MCF 10A (cell line): ENCODE measurements at regions of chr3 and their contacts with region 1.

Region 1: GRCh38 chr3:39288300-39288808 is 8.5 kb upstream of the CX3CR1 start:
- DNase-seq: peak; percentile 80
- H3K4me3 Mint-ChIP-seq: no peak overlapping the region
- H3K27ac Mint-ChIP-seq: no peak overlapping the region
- H3K4me1 Mint-ChIP-seq: peaks cover 7% of the 10 kb centered on the region
- H3K27me3 Mint-ChIP-seq: no peaks in the 10 kb centered on the region
- CTCF ChIP-seq: peak; percentile 94

Region 2: DNA sequence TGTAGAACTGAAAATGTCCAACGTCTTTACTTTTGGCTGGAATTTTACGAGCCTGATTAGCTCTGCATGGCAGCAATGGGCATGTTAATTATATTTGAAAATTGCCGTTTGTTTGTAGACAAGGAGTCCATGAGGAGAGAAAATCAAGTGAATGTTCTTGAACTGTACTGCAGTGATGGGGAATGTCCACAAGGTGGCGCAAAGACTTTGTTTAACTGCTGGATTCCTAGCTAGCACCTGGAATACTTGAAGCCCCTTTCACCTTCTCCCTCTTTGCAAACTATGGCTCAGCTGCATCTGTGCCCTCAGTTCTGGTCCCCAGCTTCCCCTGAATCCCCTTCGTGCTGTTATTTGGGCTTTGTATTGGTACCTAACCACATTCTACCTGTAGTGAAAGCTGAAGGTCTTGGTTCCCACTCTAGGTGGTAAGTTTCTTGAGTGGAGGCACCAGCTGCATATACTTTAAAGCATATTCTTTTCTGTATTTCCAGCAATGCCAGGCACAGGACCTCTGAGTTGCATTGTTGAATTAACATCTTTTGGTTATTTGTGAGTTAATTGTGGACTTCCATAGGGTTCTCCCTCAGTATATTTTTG is 766.9 kb before region 1 on chr3:
- CTCF ChIA-PET with region 1: interaction called, 16 read pairs
- POLR2A ChIA-PET with region 1: no interaction called
- intact Hi-C with region 1: no loop called
- DNase-seq: peak; percentile 76
- H3K4me3 Mint-ChIP-seq: no peak overlapping the region
- H3K27ac Mint-ChIP-seq: no peak overlapping the region
- H3K4me1 Mint-ChIP-seq: no peaks in the 10 kb centered on the region
- H3K27me3 Mint-ChIP-seq: no peaks in the 10 kb centered on the region
- CTCF ChIP-seq: peak; percentile 87

Region 3: GRCh38 chr3:39107388-39108199 is 180.8 kb before region 1 on chr3 and contains the starts of genes GORASP1 and TTC21A:
- CTCF ChIA-PET with region 1: interaction called, 39 read pairs
- POLR2A ChIA-PET with region 1: interaction called, 7 read pairs
- intact Hi-C with region 1: no loop called
- DNase-seq: peak; percentile 84
- H3K4me3 Mint-ChIP-seq: peak within 1 kb of the TSS; percentile 94
- H3K27ac Mint-ChIP-seq: peak within 1 kb of the TSS; percentile 94
- H3K4me1 Mint-ChIP-seq: peaks cover 37% of the 10 kb centered on the region
- H3K27me3 Mint-ChIP-seq: no peaks in the 10 kb centered on the region
- CTCF ChIP-seq: no peak
- total RNA-seq, gene GORASP1: 34.4 and 40.7 TPM in 2 replicates
- total RNA-seq, gene TTC21A: 2.1 and 5.4 TPM in 2 replicates

Region 4: GRCh38 chr3:39166134-39166731 is 122.1 kb before region 1 on chr3:
- CTCF ChIA-PET with region 1: interaction called, 16 read pairs
- POLR2A ChIA-PET with region 1: no interaction called
- intact Hi-C with region 1: no loop called
- DNase-seq: peak; percentile 90
- H3K4me3 Mint-ChIP-seq: no peak overlapping the region
- H3K27ac Mint-ChIP-seq: no peak overlapping the region
- H3K4me1 Mint-ChIP-seq: peaks cover 14% of the 10 kb centered on the region
- H3K27me3 Mint-ChIP-seq: no peaks in the 10 kb centered on the region
- CTCF ChIP-seq: no peak

Region 5: GRCh38 chr3:39208463-39209055 is 79.8 kb before region 1 on chr3:
- CTCF ChIA-PET with region 1: interaction called, 339 read pairs
- POLR2A ChIA-PET with region 1: interaction called, 3 read pairs
- intact Hi-C with region 1: loop called (anchors 1 kb)
- DNase-seq: peak; percentile 67
- H3K4me3 Mint-ChIP-seq: no peak overlapping the region
- H3K27ac Mint-ChIP-seq: no peak overlapping the region
- H3K4me1 Mint-ChIP-seq: no peaks in the 10 kb centered on the region
- H3K27me3 Mint-ChIP-seq: peaks cover 38% of the 10 kb centered on the region
- CTCF ChIP-seq: peak; percentile 39

Region 6: DNA sequence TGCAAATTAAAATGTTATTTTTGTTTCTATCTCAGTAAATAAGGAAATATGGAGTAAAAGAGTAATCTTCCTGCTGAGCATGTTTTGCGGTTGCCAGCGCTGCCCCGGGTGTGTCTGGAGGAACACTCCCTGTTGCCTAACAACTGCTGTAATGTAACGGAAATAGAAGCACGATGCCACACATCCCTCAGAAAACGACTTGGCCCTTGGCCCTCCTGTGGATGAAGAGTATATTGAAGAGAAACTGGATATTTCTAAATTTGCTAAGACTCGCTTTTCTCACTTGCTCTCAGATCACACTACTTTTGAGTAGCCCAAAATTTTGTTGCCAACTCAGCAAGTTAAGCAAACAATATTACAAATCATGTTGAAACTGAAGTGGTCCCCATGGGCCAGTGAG is 27.4 kb before region 1 on chr3:
- CTCF ChIA-PET with region 1: interaction called, 44 read pairs
- POLR2A ChIA-PET with region 1: interaction called, 3 read pairs
- intact Hi-C with region 1: no loop called
- DNase-seq: peak; percentile 92
- H3K4me3 Mint-ChIP-seq: no peak overlapping the region
- H3K27ac Mint-ChIP-seq: peak overlapping the region; percentile 89
- H3K4me1 Mint-ChIP-seq: no peaks in the 10 kb centered on the region
- H3K27me3 Mint-ChIP-seq: peaks cover 48% of the 10 kb centered on the region
- CTCF ChIP-seq: peak; percentile 27

Region 7: DNA sequence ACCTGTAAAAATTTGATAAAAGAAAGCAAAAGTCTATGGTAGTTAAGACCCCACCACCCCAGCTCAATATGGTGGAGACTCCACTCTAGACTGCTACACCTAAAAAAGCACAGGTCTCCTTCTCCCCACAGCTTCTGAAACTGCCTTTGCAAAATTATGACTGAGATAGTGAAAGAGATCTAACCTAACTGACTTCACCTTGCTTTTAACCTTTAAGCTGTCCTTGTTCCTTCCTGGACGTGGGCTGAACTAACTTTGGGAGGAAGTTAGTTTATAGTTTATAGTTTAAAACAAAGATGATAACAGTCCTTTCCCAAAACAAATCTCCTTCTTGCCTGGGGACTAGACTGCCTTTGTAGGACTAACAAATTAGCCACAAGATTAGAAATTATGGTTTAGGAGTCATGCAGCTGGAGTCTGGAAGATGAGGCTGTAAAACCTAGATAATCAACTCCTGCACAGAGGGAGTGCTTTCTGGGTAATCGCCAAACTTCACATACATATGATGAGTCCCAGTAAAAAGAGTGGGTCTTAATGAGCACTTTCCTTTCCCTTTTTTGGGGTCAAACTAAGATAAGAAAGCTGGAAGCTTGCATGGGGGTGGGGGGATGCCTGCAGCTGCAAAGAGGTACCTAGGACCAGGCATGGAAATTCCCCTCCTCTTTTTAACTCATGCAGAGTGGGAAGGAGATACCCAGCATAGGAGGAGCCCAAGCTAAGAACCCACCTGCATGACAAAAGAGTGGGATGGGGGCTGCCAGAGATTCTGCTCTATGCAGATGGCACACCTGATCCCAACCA is 58.6 kb after region 1 on chr3:
- CTCF ChIA-PET with region 1: interaction called, 14 read pairs
- POLR2A ChIA-PET with region 1: no interaction called
- intact Hi-C with region 1: no loop called
- DNase-seq: no peak
- H3K4me3 Mint-ChIP-seq: no peak overlapping the region
- H3K27ac Mint-ChIP-seq: no peak overlapping the region
- H3K4me1 Mint-ChIP-seq: peaks cover 6% of the 10 kb centered on the region
- H3K27me3 Mint-ChIP-seq: no peaks in the 10 kb centered on the region
- CTCF ChIP-seq: no peak